Common myeloid progenitor, CD34-positive (primary cell): ENCODE measurements at regions of chr12 and their contacts with region 1.

Region 1: DNA sequence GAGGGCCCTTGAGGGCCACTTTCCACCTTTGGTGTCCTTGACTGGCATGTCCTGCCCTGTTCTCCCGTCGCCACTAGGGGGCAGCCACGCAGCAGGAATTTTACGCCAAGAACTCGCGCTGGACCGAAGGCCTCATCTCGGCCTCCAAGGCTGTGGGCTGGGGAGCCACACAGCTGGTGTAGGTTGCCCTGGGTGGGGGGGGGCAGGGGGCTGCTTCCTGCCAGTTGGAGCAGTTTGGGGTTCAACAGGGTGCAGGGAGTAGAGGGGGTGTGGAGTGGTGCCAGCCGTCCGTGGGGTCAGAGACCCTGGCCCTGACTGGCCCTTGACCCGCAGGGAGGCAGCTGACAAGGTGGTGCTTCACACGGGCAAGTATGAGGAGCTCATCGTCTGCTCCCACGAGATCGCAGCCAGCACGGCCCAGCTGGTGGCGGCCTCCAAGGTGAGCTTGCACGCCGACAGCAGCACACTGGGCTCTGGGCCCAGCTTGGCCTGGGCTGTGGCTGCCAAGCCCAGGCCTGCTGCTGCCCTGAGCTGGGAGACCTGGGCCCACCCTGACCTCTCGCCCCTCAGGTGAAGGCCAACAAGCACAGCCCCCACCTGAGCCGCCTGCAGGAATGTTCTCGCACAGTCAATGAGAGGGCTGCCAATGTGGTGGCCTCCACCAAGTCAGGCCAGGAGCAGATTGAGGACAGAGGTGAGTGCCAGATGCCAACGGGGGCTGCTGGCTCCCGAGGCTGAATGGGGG is 25.3 kb downstream of the HIP1R start:
- DNase-seq: peak; percentile 70 to 86 (median 78)
- H3K4me3 ChIP-seq: no peak overlapping the region
- H3K27ac ChIP-seq: no peak overlapping the region
- H3K4me1 ChIP-seq: peaks cover 0 to 2% (median 0%) of the 10 kb centered on the region in 4 experiments
- H3K27me3 ChIP-seq: no peaks in the 10 kb centered on the region

Region 2: DNA sequence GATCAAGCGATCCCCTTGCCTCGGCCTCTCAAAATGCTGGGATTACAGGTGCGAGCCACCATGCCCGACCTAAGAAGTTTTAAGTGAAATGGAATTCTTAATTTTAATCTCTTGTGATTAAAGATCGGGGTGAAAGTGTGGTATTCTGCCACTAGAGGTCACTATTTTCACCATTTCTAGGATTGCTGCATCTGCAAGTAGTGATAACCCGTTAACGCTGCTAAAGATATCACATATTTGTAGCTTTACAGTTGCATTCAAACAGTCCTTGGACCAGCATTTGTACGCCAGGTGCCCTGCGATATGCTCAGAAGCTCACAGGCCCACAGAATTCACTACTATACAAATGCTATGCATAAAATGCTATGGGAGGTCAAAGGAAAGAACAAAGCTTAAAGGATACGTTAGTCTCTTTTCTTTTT is 66.8 kb before region 1 on chr12:
- CTCF ChIA-PET with region 1: interaction called, 18 read pairs
- POLR2A ChIA-PET with region 1: no interaction called
- DNase-seq: peak; percentile 74 to 86 (median 84)
- H3K4me3 ChIP-seq: peak overlapping the region in 2 of 7 experiments; percentile 4 to 32
- H3K27ac ChIP-seq: no peak overlapping the region
- H3K4me1 ChIP-seq: peaks cover 0 to 2% (median 0%) of the 10 kb centered on the region in 4 experiments
- H3K27me3 ChIP-seq: no peaks in the 10 kb centered on the region

Region 3: DNA sequence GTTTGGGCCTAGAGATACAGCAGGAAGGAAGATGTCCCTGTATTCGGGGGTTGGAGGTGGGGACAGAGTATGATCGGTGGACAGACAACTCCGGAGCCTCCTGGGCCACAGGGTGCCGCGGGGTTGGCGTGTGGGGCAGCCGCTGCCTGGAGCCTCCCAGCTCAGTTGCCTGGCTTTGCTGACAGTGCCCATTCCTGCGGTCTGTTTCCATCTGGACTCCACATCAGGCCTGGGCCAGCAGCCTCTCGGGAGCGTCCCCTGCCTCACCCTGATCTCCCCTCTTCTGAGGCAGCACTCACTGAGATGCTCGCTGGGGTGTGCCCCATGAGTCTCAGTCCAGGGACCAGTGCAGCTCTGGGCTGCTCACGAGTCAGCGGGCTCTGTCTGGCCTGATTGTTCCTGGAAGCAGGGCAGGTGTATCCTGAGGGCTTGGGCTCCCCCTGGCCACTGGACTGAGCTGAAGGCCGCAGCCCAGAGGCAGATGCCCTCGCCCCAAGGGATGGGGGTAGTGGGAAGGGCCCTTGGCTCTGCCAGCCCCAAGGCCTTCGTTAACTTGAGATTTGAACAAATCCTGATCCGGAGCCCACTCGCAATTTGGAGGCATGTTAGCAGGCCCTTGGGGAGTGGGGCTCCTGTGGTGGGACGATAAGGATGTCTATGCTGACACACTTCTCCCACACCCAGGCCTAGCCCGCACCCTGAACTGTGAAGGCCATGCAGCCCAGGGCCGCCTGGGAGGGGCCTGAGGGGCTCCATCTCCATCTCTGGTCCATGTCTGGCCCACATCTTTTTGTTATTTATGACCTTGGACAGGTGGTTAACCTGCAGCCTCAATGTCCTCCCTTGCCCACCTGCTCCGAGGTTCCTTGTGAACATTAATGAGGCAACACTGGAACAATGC is 17.8 kb before region 1 on chr12:
- CTCF ChIA-PET with region 1: interaction called, 11 read pairs
- POLR2A ChIA-PET with region 1: no interaction called
- DNase-seq: no peak
- H3K4me3 ChIP-seq: no peak overlapping the region
- H3K27ac ChIP-seq: no peak overlapping the region
- H3K4me1 ChIP-seq: peaks cover 0 to 3% (median 1%) of the 10 kb centered on the region in 4 experiments
- H3K27me3 ChIP-seq: no peaks in the 10 kb centered on the region

Region 4: GRCh38 chr12:122871851-122872780 is 11.6 kb after region 1 on chr12:
- CTCF ChIA-PET with region 1: interaction called, 83 read pairs
- POLR2A ChIA-PET with region 1: interaction called, 4 read pairs
- DNase-seq: peak; percentile 57 to 88 (median 84)
- H3K4me3 ChIP-seq: peak overlapping the region in 6 of 7 experiments; percentile 41 to 75 (median 63)
- H3K27ac ChIP-seq: peak overlapping the region; percentile 37 to 80
- H3K4me1 ChIP-seq: peaks cover 18 to 63% (median 56%) of the 10 kb centered on the region in 4 experiments
- H3K27me3 ChIP-seq: no peaks in the 10 kb centered on the region

Region 5: DNA sequence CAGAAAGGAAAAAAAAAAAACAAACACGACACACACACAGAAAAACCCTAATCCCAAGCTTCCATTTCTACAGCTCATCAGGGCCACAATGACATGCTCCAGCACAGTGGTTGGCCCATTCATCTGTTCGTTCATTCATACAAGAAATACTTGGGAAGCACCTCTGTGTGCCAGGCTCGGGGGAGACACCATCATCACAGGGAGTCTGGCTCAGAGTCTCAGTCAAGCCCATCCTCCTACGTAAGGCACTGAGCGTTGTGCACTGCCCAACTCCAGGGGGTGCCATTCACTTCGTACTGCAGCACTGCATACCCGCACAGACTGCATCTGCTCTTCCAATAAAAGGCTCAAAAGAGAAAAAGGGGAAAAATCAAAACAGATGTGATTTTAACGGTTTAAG is 20.1 kb after region 1 on chr12:
- CTCF ChIA-PET with region 1: interaction called, 83 read pairs
- POLR2A ChIA-PET with region 1: interaction called, 4 read pairs
- DNase-seq: peak; percentile 64 to 72 (median 72)
- H3K4me3 ChIP-seq: peak overlapping the region in 2 of 7 experiments; percentile 9 to 43
- H3K27ac ChIP-seq: peak overlapping the region; percentile 97
- H3K4me1 ChIP-seq: peaks cover 33 to 96% (median 78%) of the 10 kb centered on the region in 4 experiments
- H3K27me3 ChIP-seq: no peaks in the 10 kb centered on the region

Region 6: DNA sequence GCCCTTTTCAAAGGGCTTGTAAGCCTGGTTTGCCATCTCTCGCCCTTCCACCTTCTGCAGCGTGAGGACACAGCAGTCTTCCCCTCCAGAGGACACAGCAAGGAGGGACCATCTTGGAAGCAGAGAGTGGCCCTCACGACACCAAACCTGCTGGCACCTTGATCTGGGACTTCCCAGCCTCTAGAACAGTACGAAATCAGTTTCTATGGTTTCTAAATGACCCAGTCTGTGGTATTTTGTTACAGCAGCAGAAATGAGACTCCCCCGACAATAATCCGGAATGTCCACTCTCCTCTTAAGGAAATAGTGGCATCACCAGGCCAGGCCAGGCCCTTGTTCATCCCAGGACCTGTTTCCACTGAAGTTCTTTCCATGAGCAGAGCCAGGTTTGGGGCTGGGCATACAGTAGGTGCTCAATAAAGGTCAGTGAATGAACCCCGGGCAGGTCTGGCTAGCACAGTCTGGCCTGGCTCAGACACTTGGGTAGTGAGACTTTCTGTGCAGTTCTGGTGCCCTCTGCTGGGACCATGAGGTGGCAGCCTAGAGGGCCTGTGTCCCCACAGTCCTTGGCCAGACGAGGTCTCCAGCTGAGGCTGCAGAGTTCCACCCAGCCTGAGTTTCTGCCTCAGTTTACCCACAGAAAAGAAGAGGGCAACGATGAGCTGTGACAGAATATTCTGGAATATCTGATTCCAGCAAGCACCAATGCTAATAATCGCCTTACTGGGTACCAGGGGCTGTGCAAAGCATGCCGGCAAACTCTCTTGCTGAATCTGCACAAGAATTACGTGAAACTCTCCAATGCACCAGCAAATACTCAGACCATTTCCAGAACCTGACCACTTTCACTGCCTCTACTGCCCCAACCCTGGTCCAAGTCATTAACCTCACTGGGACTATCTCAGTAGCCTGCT is 91.7 kb after region 1 on chr12:
- CTCF ChIA-PET with region 1: interaction called, 421 read pairs
- POLR2A ChIA-PET with region 1: interaction called, 5 read pairs
- DNase-seq: peak; percentile 68 to 82 (median 74)
- H3K4me3 ChIP-seq: no peak overlapping the region
- H3K27ac ChIP-seq: no peak overlapping the region
- H3K4me1 ChIP-seq: peaks cover 0 to 10% (median 8%) of the 10 kb centered on the region in 4 experiments
- H3K27me3 ChIP-seq: no peaks in the 10 kb centered on the region

Region 7: GRCh38 chr12:123232807-123233543 is 372.5 kb after region 1 on chr12 and contains the starts of genes MPHOSPH9 and MTRFR:
- CTCF ChIA-PET with region 1: interaction called, 20 read pairs
- POLR2A ChIA-PET with region 1: no interaction called
- DNase-seq: peak; percentile 99 to 100 (median 100)
- H3K4me3 ChIP-seq: peak within 1 kb of the TSS; percentile 82 to 99 (median 97)
- H3K27ac ChIP-seq: peak within 1 kb of the TSS; percentile 85 to 95
- H3K4me1 ChIP-seq: peaks cover 38 to 65% (median 53%) of the 10 kb centered on the region in 4 experiments
- H3K27me3 ChIP-seq: no peaks in the 10 kb centered on the region